Gastrocnemius medialis (tissue), 4 donors: ENCODE measurements at regions of chr9 and their contacts with region 1.

Region 1: GRCh38 chr9:4397917-4398316 is 92.4 kb upstream of the SLC1A1 start:
- DNase-seq: no peak
- ATAC-seq: no peak
- H3K4me3 ChIP-seq: no peak overlapping the region
- H3K27ac ChIP-seq: no peak overlapping the region
- H3K4me1 ChIP-seq: no peaks in the 10 kb centered on the region
- H3K27me3 ChIP-seq: no peaks in the 10 kb centered on the region
- CTCF ChIP-seq: no peak
- POLR2A ChIP-seq: no peak

Region 2: DNA sequence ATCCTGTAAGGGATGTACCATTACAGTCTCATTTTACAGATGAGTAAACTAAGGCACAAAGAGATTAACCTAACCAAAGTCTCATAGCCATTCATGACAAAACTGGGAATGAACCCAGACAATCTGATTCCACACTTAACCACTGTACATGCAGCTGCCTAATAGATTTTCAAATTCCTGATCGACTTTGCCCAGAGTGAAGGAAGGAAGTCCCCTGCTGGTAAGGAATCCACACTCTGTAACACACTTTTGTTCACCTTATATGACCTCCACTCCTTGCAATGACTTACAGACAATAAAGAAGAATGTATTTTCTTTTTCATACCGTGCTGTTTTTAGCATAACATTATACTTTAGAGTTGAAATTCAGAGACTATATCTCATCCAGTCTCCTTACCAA is 232.9 kb after region 1 on chr9:
- in situ Hi-C with region 1: loop called in 2 of 4 experiments (anchors 10 to 25 kb)
- intact Hi-C with region 1: no loop called
- DNase-seq: no peak
- ATAC-seq: no peak
- H3K4me3 ChIP-seq: no peak overlapping the region
- H3K27ac ChIP-seq: no peak overlapping the region
- H3K4me1 ChIP-seq: no peaks in the 10 kb centered on the region
- H3K27me3 ChIP-seq: no peaks in the 10 kb centered on the region
- CTCF ChIP-seq: no peak
- POLR2A ChIP-seq: no peak